ENCODE measurements at regions of chr19 and their contacts with region 1.

Region 1: GRCh38 chr19:2750808-2751443 is 11.1 kb upstream of the SLC39A3 start:
- DNase-seq: no peak
- H3K4me3 ChIP-seq: no peak overlapping the region
- CTCF ChIP-seq: no peak

Region 2: GRCh38 chr19:2663920-2664571 is 86.9 kb before region 1 on chr19:
- CTCF ChIA-PET with region 1: interaction called, 11 read pairs
- POLR2A ChIA-PET with region 1: no interaction called
- DNase-seq: no peak
- H3K4me3 ChIP-seq: no peak overlapping the region
- CTCF ChIP-seq: no peak

Region 3: DNA sequence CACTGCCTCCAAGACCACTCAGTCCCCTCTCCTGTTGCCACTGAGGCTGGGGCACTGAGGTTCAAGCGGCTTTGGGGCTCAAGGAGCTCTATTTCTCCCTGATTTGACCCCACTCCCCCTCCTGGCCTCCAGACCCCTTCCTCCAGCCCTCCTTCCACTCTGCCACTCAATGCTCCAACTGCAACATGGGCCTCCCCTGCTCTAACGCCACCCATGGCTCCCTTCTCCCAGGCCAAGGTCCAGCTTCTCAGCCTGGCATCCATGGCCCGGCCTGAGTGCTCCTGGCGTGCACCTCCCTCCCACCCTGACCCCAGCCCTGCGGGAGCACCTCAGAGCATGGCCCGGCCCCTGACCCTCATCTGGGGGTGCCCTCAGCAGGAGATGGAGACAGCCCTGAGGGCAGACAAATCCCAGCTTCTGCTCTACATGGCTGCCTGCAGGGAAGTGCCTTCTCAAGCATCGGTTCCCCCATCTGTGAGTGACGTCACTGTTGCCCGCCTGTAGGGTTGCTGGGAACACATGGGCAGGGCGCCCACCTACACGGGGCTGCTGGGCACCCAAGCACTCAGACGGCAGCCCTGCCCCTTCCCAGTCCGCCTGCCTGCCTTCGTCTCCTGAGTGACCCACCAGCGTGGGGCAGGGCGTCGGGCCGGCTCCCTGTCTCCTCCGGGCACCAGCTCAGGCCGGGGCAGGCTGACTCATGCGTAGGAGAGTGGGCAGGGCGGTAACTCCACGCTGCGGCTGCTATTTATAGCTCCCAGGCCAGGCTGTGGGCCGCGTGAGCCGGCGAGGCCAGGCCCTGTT is 28.2 kb before region 1 on chr19:
- CTCF ChIA-PET with region 1: interaction called, 16 read pairs
- POLR2A ChIA-PET with region 1: no interaction called
- DNase-seq: no peak
- H3K4me3 ChIP-seq: no peak overlapping the region
- CTCF ChIP-seq: no peak

Region 4: GRCh38 chr19:2768365-2769132 is 17.6 kb after region 1 on chr19:
- CTCF ChIA-PET with region 1: interaction called, 14 read pairs
- POLR2A ChIA-PET with region 1: no interaction called
- DNase-seq: no peak
- H3K4me3 ChIP-seq: no peak overlapping the region
- CTCF ChIP-seq: no peak

Region 5: DNA sequence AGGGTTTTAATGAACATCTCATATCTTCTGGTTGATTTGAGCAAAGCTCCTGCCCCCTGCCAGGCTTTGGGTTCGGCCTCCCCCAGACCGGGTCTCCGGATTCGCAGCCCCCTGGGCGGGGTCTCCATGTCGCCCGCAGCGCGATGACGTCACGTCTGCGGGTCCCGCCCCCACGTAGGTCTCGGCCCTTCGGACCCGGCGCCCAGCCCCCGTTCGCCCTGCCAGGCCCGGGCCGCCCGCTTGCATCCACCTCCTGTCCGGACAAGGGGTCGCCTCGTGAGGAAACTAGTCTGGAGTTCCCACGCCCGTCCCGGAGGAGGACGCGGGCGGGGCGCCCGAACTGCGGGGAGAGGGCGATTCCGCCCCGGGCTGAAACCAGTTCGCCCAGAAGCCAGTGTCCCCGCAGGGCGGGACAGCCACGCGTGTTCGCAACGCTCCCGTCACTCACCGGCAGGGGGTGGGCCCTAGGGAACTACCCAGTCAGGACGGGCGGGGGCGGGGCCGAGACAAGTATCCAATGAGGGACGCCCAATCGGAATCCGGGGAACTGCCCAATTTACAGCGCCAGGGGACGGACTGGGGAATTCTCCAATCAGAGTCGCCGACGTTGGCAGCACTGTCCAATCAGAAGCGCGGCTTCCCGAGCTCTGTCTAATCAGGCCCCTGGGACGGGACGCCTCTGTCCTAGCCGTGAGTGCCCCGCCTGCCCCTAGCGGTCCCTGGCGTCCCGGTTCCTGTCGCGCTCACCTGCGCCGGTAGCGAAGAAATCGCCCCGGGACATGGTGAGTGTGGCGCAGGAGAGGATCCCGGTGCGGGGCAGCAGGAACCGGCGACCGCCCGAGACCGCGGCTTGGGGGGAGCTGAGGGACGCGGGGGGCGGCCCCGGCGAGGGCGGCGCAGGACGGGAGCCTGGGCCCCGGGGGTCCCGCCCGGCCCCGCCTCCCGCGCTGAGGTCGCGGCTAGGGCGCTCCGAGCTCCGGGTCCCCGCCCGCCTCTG is 90.2 kb after region 1 on chr19 and contains the start of gene ZNF555:
- CTCF ChIA-PET with region 1: no interaction called
- POLR2A ChIA-PET with region 1: no interaction called
- DNase-seq: peak; percentile 93
- H3K4me3 ChIP-seq: peak within 1 kb of the TSS; percentile 89
- CTCF ChIP-seq: peak; percentile 60